ENCODE measurements at regions of chr5 and their contacts with region 1.

Region 1: DNA sequence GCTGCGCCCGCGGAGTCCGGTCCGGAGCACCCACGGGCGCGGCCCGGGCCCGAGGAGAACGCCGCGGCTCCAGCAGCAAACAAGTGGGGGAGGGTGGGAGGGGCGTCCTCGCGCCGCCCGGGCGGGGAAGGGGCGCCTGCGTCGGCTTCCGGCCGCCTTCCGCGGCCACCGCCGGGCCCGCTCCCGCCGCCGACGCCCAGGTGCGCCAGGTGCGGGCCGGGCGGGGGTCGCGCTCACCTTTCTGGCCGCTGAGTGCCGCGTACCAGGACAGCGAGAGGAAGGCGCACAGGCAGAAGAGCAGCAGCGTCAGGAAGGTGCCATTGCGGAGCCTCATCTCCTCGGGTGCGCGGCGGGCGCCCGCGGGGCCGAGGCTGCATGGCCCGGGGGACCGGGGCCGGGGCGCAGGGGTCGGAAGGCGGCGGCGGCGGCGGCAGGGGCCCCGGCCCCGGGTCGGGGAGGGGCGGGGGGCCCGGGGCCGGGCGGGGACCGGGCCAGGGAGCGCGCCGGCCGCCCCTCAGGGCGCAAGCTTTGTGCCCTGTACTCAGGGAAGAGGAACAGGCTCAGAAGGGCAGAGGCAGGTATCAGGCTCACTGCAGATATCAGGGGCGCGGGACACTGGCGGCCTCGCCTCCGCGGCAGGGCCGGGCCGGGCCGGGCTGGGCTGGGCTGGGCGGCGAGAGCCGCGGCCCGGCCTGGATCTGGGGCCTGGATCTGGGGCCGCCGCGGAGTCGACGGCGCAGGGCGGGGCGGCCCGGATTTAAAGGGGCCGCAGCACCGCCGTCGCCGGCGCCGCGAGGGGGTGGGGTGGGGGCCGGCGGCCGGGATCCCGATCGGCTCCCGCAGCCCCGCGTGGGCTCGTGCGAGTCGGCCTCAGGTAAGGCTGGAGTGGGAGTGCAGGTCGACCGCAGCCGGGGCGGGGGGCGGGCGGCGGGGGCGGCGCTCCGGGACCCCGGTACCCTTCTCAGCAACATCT is at the start of gene MGAT4B:
- DNase-seq: no peak
- ATAC-seq: peak; percentile 63
- H3K4me3 ChIP-seq: peak within 1 kb of the TSS; percentile 60 to 95 (median 82)
- H3K27ac ChIP-seq: peak within 1 kb of the TSS; percentile 89
- H3K4me1 ChIP-seq: peaks cover 43% of the 10 kb centered on the region
- H3K27me3 ChIP-seq: no peaks in the 10 kb centered on the region
- CTCF ChIP-seq: no peak
- EP300 ChIP-seq: no peak
- POLR2A ChIP-seq: peak in 1 of 2 experiments; percentile 42; a peak in 1 of 4 replicates
- RAD21 ChIP-seq: peak; percentile 11; the same call in 1 of the 2 replicates
- total RNA-seq, gene MGAT4B: 69.2 and 93.5 TPM in 2 replicates

Region 2: GRCh38 chr5:179738742-179739141 is 67.8 kb before region 1 on chr5:
- CTCF ChIA-PET with region 1: no interaction called
- POLR2A ChIA-PET with region 1: no interaction called
- in situ Hi-C with region 1: no loop called
- intact Hi-C with region 1: no loop called
- DNase-seq: no peak
- ATAC-seq: no peak
- H3K4me3 ChIP-seq: no peak overlapping the region
- H3K27ac ChIP-seq: no peak overlapping the region
- H3K4me1 ChIP-seq: peaks cover 41% of the 10 kb centered on the region
- H3K27me3 ChIP-seq: no peaks in the 10 kb centered on the region
- CTCF ChIP-seq: no peak
- EP300 ChIP-seq: no peak
- POLR2A ChIP-seq: no peak
- RAD21 ChIP-seq: no peak

Region 3: GRCh38 chr5:179780362-179780761 is 26.2 kb before region 1 on chr5:
- CTCF ChIA-PET with region 1: no interaction called
- POLR2A ChIA-PET with region 1: no interaction called
- in situ Hi-C with region 1: no loop called
- intact Hi-C with region 1: no loop called
- DNase-seq: no peak
- ATAC-seq: no peak
- H3K4me3 ChIP-seq: no peak overlapping the region
- H3K27ac ChIP-seq: no peak overlapping the region
- H3K4me1 ChIP-seq: no peaks in the 10 kb centered on the region
- H3K27me3 ChIP-seq: no peaks in the 10 kb centered on the region
- CTCF ChIP-seq: no peak
- EP300 ChIP-seq: no peak
- POLR2A ChIP-seq: no peak
- RAD21 ChIP-seq: no peak

Region 4: GRCh38 chr5:179821581-179822432 is 15.3 kb after region 1 on chr5:
- CTCF ChIA-PET with region 1: interaction called, 3 read pairs
- POLR2A ChIA-PET with region 1: interaction called, 115 read pairs
- in situ Hi-C with region 1: no loop called
- intact Hi-C with region 1: loop called (anchors 1 kb)
- DNase-seq: peak; percentile 80
- ATAC-seq: peak; percentile 48
- H3K4me3 ChIP-seq: peak overlapping the region; percentile 97 to 99 (median 99)
- H3K27ac ChIP-seq: peak overlapping the region; percentile 99
- H3K4me1 ChIP-seq: peaks cover 81% of the 10 kb centered on the region
- H3K27me3 ChIP-seq: no peaks in the 10 kb centered on the region
- CTCF ChIP-seq: peak; percentile 37
- EP300 ChIP-seq: no peak
- POLR2A ChIP-seq: peak in 1 of 2 experiments; percentile 89; a peak in 2 of 4 replicates
- RAD21 ChIP-seq: no peak

Region 5: GRCh38 chr5:179827680-179828079 is 21.1 kb after region 1 on chr5:
- CTCF ChIA-PET with region 1: interaction called, 3 read pairs
- POLR2A ChIA-PET with region 1: interaction called, 11 read pairs
- in situ Hi-C with region 1: no loop called
- intact Hi-C with region 1: loop called (anchors 2 kb)
- DNase-seq: no peak
- ATAC-seq: no peak
- H3K4me3 ChIP-seq: no peak overlapping the region
- H3K27ac ChIP-seq: peak overlapping the region; percentile 38
- H3K4me1 ChIP-seq: peaks cover 76% of the 10 kb centered on the region
- H3K27me3 ChIP-seq: no peaks in the 10 kb centered on the region
- CTCF ChIP-seq: 0 out of 2 replicates have a peak, but pooled peaks have one; percentile 7
- EP300 ChIP-seq: no peak
- POLR2A ChIP-seq: no peak; a peak in 1 of 4 replicates
- RAD21 ChIP-seq: no peak

Region 6: GRCh38 chr5:179836225-179837019 is 29.9 kb after region 1 on chr5:
- CTCF ChIA-PET with region 1: interaction called, 5 read pairs
- POLR2A ChIA-PET with region 1: interaction called, 12 read pairs
- in situ Hi-C with region 1: no loop called
- intact Hi-C with region 1: no loop called
- DNase-seq: no peak
- ATAC-seq: peak; percentile 8
- H3K4me3 ChIP-seq: no peak overlapping the region
- H3K27ac ChIP-seq: no peak overlapping the region
- H3K4me1 ChIP-seq: peaks cover 14% of the 10 kb centered on the region
- H3K27me3 ChIP-seq: no peaks in the 10 kb centered on the region
- CTCF ChIP-seq: peak; percentile 35; the same call in 1 of the 2 replicates
- EP300 ChIP-seq: no peak
- POLR2A ChIP-seq: no peak
- RAD21 ChIP-seq: no peak